ENCODE measurements at regions of chr6 and their contacts with region 1.

Region 1: DNA sequence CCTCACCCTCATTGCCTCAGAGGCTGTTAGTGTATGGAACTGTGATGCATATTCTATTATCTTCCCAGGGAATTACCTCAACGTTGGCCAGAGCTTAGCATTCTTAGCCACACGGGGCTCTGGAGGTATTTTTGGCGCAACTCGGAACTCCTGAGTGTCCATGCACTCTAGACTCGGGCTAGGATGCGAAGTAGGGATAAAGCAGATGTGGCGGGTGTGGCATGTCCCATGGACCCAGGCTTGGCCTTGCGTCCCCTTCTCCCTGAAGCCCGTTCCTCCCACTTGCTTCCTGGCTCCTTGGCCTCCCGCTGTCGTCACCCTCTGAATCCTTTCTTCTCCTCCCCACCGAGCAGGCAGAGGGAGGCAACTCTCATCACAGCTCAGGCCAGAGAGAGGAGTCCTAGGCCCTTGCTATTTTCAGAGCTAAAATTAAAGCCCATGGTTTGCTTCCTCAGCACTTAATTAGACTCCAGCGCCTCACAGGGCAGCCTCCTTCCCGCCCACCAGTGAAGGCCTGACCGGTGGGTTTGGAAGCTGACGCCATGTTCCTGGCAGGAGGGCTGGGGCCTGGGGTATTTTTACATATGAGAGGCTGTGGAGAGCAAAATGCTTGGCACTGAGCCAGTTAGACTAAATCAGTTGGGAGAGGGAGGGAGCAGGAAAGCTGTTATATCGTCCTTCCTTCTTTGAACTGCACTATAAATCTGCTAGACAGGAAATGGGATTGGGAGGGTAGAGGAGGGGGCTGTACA is 138.7 kb downstream of the FOXO3 start:
- DNase-seq: no peak
- ATAC-seq: peak; percentile 9
- H3K4me3 ChIP-seq: no peak overlapping the region
- H3K27ac ChIP-seq: peak overlapping the region; percentile 8 to 37
- H3K4me1 ChIP-seq: peaks cover 2 to 4% of the 10 kb centered on the region in 2 donors
- H3K27me3 ChIP-seq: no peaks in the 10 kb centered on the region

Region 2: DNA sequence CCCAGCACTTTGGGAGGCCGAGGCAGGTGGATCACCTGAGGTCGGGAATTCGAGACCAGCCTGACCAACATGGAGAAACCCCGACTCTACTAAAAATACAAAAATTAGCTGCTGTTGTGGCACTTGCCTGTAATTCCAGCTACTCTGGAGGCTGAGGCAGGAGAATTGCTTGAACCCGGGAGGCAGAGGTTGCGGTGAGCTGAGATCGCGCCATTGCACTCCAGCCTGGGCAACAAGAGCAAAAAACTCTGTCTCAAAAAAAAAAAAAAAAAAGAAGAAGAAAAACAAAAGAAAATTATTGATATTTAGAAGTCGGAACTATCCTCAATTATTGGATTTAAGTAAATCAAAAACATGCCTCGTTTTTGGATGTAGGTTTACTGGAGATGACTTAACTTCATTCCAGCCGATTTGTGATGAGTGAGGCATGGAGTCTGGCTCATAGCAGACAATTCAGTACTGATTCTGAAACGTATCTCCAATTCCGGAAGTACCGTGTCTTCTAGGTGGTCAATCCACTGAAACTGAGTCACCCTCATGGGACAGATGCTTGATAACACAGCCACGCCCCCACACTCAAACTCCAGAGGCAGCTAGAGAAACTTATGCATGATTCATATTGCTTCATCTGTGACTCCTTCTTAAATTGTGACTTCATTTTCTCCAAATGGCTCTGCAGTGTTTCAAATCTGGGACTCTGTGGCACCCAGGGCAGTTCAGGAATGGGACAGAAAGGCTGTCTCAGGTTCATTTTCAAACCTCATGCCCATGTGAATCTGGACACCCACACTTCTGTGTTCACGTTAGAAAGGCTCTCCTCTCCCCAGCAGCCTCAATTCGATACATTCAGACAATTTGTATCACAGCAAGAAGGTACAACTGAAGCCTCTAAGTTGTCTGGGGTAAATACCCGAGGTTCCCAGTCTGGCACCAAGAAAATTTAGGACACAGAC is 38.4 kb after region 1 on chr6:
- intact Hi-C with region 1: loop called in 1 of 2 experiments (anchors 5 kb)
- DNase-seq: peak; percentile 84 to 88
- ATAC-seq: peak; percentile 78
- H3K4me3 ChIP-seq: no peak overlapping the region
- H3K27ac ChIP-seq: peak overlapping the region in 1 of 2 donors; percentile 43
- H3K4me1 ChIP-seq: peaks cover 5 to 14% of the 10 kb centered on the region in 2 donors
- H3K27me3 ChIP-seq: no peaks in the 10 kb centered on the region

Region 3: GRCh38 chr6:108764580-108764950 is 65.1 kb after region 1 on chr6:
- intact Hi-C with region 1: no loop called
- DNase-seq: no peak
- ATAC-seq: no peak
- H3K4me3 ChIP-seq: no peak overlapping the region
- H3K27ac ChIP-seq: no peak overlapping the region
- H3K4me1 ChIP-seq: no peaks in the 10 kb centered on the region
- H3K27me3 ChIP-seq: no peaks in the 10 kb centered on the region

Measured in aorta (tissue), 5 donors.